Activated T-helper 1 cell treated with anti-CD3 and anti-CD28 coated beads, Interleukin-12 subunit alpha, Interleukin-12 subunit beta, Interleukin-2, Interleukin-4 antibody, amounts not matched to agents 30 ng/mL and 10 ng/mL and 1 ng/mL, durations not matched to agents 14 hours and 24 hours and 36 hours (primary cell): ENCODE measurements at regions of chr18 and their contacts with region 1.

Region 1: GRCh38 chr18:47832348-47832747 is 98.1 kb downstream of the SMAD2 start:
- DNase-seq: no peak
- H3K4me3 Mint-ChIP-seq: no peak overlapping the region
- H3K27ac Mint-ChIP-seq: peak overlapping the region; percentile 3
- H3K4me1 Mint-ChIP-seq: peaks cover 11% of the 10 kb centered on the region
- H3K27me3 Mint-ChIP-seq: no peaks in the 10 kb centered on the region

Region 2: GRCh38 chr18:47847635-47848034 is 15.3 kb after region 1 on chr18:
- intact Hi-C with region 1: loop called (anchors 2 kb)
- DNase-seq: no peak
- H3K4me3 Mint-ChIP-seq: no peak overlapping the region
- H3K27ac Mint-ChIP-seq: no peak overlapping the region
- H3K4me1 Mint-ChIP-seq: no peaks in the 10 kb centered on the region
- H3K27me3 Mint-ChIP-seq: no peaks in the 10 kb centered on the region

Region 3: GRCh38 chr18:47876813-47877212 is 44.5 kb after region 1 on chr18:
- intact Hi-C with region 1: loop called (anchors 5 kb)
- DNase-seq: no peak
- H3K4me3 Mint-ChIP-seq: no peak overlapping the region
- H3K27ac Mint-ChIP-seq: no peak overlapping the region
- H3K4me1 Mint-ChIP-seq: peaks cover 33% of the 10 kb centered on the region
- H3K27me3 Mint-ChIP-seq: no peaks in the 10 kb centered on the region